PC-9 (cell line): ENCODE measurements at regions of chr11 and their contacts with region 1.

Region 1: DNA sequence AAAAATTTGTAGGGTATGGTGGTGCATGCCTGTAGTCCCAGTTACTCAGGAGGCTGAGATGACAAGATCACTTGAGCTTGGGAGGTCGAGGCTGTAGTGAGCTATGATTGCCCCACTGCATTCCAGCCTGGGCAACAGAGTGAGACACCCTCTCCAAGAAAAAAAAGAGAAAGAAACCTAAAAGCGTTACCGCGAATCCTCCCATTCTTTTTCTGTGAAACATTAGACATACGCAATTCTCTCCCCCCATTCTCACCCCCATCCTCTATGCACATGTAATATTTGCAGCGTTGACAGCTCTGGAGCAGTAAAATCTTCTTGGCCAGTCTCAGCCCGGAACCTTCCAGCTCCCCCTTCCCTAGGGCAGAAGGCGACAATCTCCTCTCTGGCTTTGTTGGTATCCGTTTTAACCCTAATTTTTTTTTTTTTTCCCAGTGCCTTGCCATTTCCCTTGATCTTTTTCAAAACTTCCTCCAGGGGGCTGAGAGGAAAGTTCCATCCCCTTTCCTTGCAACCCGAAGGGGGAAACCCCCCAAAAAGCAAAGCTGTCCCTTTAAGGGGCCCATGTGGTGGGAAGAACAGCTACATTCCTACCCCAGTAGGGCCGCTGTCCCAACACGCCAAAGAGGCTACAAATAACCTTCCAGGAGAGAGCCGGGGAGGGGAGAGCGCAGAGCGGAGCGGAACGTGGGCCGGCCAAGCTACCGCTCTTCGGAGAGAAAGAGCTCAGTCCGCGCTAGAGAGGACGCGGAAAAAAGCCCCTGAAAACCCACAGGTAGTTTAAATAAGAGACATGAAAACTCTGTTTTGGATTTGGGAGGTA is 1.9 kb downstream of the LRP4 start:
- DNase-seq: peak in 1 of 2 experiments; percentile 48
- H3K4me3 ChIP-seq: peak overlapping the region; percentile 58; the same call in 1 of the 2 replicates
- H3K27ac ChIP-seq: no peak overlapping the region
- H3K4me1 ChIP-seq: peaks cover 9% of the 10 kb centered on the region; the same call in 1 of the 2 replicates
- H3K27me3 ChIP-seq: peaks cover 23% of the 10 kb centered on the region
- CTCF ChIP-seq: no peak

Region 2: GRCh38 chr11:46936138-46937110 is 19.9 kb after region 1 on chr11 and contains the start of gene CSTPP1:
- CTCF ChIA-PET with region 1: no interaction called
- POLR2A ChIA-PET with region 1: no interaction called
- intact Hi-C with region 1: loop called (anchors 2 kb)
- DNase-seq: peak; percentile 86 to 95
- H3K4me3 ChIP-seq: peak within 1 kb of the TSS; percentile 73
- H3K27ac ChIP-seq: peak within 1 kb of the TSS; percentile 10; the same call in 1 of the 2 replicates
- H3K4me1 ChIP-seq: peaks cover 4% of the 10 kb centered on the region
- H3K27me3 ChIP-seq: no peaks in the 10 kb centered on the region
- CTCF ChIP-seq: no peak
- total RNA-seq, gene CSTPP1: 87.2 and 88.3 TPM in 2 replicates

Region 3: DNA sequence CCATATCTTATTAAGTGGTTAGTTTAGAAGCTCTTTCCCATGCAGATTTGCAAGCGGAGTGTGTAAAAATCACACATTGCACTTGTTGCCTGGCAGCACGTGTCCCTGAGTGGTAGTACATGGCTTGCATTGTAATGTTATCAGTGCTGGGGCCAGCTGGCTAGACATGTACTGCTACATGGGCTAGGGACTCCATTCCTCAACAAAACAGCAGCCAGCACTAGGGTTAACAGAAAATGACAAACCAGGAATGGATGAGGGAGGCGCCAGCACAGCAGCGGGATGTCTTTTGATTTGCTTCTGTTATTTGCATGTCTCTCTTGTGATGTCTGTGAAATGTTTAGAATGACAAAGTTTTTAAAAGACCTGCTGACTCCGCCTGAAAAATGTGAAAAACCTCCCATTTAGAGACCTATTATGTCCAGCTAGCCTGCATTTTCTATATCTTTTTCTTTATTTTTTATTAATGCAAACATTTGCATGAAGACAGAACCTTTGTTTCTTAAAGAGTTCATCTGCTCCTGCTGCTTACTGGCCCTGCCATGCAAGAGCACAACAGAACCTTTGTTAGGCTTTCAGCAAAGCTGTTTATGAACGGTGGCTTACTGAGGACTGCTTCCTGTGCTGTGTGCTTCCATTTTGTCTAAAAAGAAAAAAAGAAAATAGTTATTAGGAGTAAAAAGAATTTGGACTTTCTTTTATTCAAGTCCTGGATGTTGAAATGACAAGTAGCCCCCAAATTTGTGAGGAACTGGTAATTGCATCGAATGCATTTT is 60.7 kb after region 1 on chr11:
- CTCF ChIA-PET with region 1: no interaction called
- POLR2A ChIA-PET with region 1: interaction called, 10 read pairs
- intact Hi-C with region 1: no loop called
- DNase-seq: no peak
- H3K4me3 ChIP-seq: no peak overlapping the region
- H3K27ac ChIP-seq: no peak overlapping the region
- H3K4me1 ChIP-seq: peaks cover 14% of the 10 kb centered on the region; the same call in 1 of the 2 replicates
- H3K27me3 ChIP-seq: no peaks in the 10 kb centered on the region
- CTCF ChIP-seq: no peak

Region 4: DNA sequence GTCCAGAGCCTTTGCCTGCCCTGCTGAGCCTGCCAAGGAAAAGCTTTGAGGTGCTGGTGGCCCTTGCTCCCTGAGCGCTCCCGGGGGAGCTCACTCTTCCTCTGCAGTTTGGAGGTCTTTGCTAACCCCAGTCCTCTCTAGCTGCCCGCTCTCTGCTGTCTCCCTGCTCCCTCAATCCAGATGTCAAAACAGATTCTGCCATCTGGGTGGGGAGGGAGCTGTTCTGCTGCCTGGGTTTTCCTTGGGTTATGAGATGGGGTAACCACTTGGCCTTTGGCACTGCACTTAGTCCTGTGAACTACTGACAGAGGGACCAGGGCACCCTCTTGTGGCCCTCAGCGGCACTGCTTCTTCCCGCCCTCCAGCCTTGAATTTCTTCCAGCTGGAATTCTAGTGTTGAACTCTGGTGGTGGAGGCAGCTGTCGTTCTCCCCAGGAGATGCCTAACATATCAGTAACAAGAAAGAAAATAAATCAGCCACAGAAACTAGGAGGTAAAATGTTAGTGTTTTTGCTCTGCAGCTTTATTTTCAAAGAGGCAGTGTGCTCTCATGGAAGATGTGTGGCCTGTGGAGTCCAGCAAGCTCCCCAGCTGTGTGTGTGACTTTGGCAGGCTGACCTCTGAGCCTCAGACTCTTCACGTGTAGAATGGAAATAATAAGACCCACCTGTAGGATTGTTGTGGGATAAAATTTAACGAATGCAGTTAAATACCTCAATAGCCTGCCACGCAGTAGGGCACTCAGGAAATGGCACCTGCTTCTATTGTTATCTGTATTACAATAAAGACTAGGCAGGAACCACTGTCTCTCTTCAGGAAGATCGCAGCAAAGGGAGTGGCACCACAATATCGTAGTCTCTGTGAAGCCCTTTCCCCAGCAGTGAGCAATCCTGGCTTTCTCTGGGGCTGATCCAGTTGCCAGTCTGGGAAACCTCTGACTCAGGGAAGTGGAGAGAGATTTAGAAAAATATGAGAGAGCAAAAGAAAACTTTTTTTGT is 236.8 kb after region 1 on chr11:
- CTCF ChIA-PET with region 1: interaction called, 5 read pairs
- POLR2A ChIA-PET with region 1: no interaction called
- intact Hi-C with region 1: loop called (anchors 1 kb)
- DNase-seq: peak; percentile 66 to 79
- H3K4me3 ChIP-seq: no peak overlapping the region
- H3K27ac ChIP-seq: no peak overlapping the region
- H3K4me1 ChIP-seq: no peaks in the 10 kb centered on the region
- H3K27me3 ChIP-seq: no peaks in the 10 kb centered on the region
- CTCF ChIP-seq: peak; percentile 99